Activated naive CD4-positive, alpha-beta T cell treated with anti-CD3 and anti-CD28 coated beads, Interleukin-2, amount 10 ng/mL, durations not matched to agents 7 days and 5 days (primary cell): ENCODE measurements at regions of chr9 and their contacts with region 1.

Region 1: DNA sequence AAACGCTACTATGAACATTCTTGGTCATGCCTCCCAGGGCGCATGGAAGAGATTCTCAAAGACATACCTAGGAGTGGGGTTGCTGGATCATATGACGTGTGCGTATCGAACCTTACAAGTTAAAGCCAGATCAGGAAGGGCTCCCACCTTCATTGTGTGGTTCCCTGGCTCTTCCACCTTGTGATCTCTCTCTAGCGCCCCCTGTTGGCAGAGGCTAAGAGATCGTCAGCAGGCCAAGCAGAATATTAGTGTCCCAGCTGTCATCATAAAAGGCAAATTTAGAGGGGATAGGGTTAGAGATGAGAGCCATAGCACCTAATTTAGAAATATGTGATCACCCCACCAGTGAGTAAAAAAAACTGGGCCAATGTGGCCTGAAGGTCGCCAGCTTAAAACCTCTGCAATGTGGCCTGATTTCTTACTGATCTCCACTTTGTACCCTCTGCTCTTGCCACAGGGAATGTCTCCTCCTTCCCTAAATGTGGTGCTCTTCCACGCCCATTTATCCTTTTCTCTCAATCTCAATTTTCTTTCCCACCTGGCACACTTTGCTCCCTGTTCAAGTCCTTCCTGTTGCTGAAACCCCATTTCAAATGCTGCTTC is 91.7 kb upstream of the SHB start:
- DNase-seq: peak; percentile 73
- H3K4me3 Mint-ChIP-seq: no peak overlapping the region
- H3K27ac Mint-ChIP-seq: no peak overlapping the region
- H3K4me1 Mint-ChIP-seq: peaks cover 3% of the 10 kb centered on the region
- H3K27me3 Mint-ChIP-seq: peaks cover 11% of the 10 kb centered on the region

Region 2: GRCh38 chr9:37913480-37914153 is 247.1 kb before region 1 on chr9:
- CTCF ChIA-PET with region 1: interaction called, 29 read pairs
- DNase-seq: peak; percentile 86
- H3K4me3 Mint-ChIP-seq: no peak overlapping the region
- H3K27ac Mint-ChIP-seq: no peak overlapping the region
- H3K4me1 Mint-ChIP-seq: no peaks in the 10 kb centered on the region
- H3K27me3 Mint-ChIP-seq: no peaks in the 10 kb centered on the region

Region 3: DNA sequence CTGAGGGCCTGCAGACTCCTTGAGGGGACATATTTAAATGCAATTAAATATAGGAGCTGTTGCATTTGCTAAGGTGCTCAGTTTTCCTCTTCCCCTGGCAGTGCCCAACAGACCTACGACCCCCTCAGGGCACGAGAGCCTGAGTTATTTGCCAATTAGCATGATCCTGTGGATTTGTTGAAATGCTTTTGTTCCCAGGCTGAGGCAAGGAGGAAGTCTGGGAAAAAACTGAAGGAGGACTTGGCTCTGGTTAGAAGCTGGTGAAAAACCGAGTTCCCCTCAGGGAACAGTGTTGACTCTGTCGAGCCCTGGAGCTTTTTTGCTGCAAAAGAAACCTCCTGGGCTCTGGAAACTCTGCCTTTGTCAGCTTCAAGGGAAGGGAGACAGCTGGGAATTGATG is 11.9 kb after region 1 on chr9:
- CTCF ChIA-PET with region 1: interaction called, 12 read pairs
- DNase-seq: no peak
- H3K4me3 Mint-ChIP-seq: no peak overlapping the region
- H3K27ac Mint-ChIP-seq: no peak overlapping the region
- H3K4me1 Mint-ChIP-seq: no peaks in the 10 kb centered on the region
- H3K27me3 Mint-ChIP-seq: peaks cover 7% of the 10 kb centered on the region